Activated CD4-positive, alpha-beta memory T cell treated with anti-CD3 and anti-CD28 coated beads for 36 hours (primary cell): ENCODE measurements at regions of chr3 and their contacts with region 1.

Region 1: GRCh38 chr3:30199096-30199759 is 407.2 kb upstream of the TGFBR2 start:
- DNase-seq: peak; percentile 74
- H3K4me3 Mint-ChIP-seq: no peak overlapping the region
- H3K27ac Mint-ChIP-seq: no peak overlapping the region
- H3K4me1 Mint-ChIP-seq: no peaks in the 10 kb centered on the region
- H3K27me3 Mint-ChIP-seq: peaks cover 2% of the 10 kb centered on the region

Region 2: GRCh38 chr3:30042274-30042859 is 156.9 kb before region 1 on chr3:
- CTCF ChIA-PET with region 1: interaction called, 95 read pairs
- POLR2A ChIA-PET with region 1: no interaction called
- intact Hi-C with region 1: loop called (anchors 1 kb)
- DNase-seq: peak; percentile 58
- H3K4me3 Mint-ChIP-seq: no peak overlapping the region
- H3K27ac Mint-ChIP-seq: no peak overlapping the region
- H3K4me1 Mint-ChIP-seq: no peaks in the 10 kb centered on the region
- H3K27me3 Mint-ChIP-seq: peaks cover 21% of the 10 kb centered on the region

Region 3: GRCh38 chr3:30174357-30174756 is 24.9 kb before region 1 on chr3:
- CTCF ChIA-PET with region 1: interaction called, 16 read pairs
- POLR2A ChIA-PET with region 1: no interaction called
- intact Hi-C with region 1: no loop called
- DNase-seq: no peak
- H3K4me3 Mint-ChIP-seq: no peak overlapping the region
- H3K27ac Mint-ChIP-seq: no peak overlapping the region
- H3K4me1 Mint-ChIP-seq: no peaks in the 10 kb centered on the region
- H3K27me3 Mint-ChIP-seq: peaks cover 1% of the 10 kb centered on the region

Region 4: GRCh38 chr3:30241721-30242120 is 42.5 kb after region 1 on chr3:
- CTCF ChIA-PET with region 1: interaction called, 3 read pairs
- POLR2A ChIA-PET with region 1: no interaction called
- intact Hi-C with region 1: loop called (anchors 5 kb)
- DNase-seq: no peak
- H3K4me3 Mint-ChIP-seq: no peak overlapping the region
- H3K27ac Mint-ChIP-seq: no peak overlapping the region
- H3K4me1 Mint-ChIP-seq: no peaks in the 10 kb centered on the region
- H3K27me3 Mint-ChIP-seq: peaks cover 8% of the 10 kb centered on the region

Region 5: DNA sequence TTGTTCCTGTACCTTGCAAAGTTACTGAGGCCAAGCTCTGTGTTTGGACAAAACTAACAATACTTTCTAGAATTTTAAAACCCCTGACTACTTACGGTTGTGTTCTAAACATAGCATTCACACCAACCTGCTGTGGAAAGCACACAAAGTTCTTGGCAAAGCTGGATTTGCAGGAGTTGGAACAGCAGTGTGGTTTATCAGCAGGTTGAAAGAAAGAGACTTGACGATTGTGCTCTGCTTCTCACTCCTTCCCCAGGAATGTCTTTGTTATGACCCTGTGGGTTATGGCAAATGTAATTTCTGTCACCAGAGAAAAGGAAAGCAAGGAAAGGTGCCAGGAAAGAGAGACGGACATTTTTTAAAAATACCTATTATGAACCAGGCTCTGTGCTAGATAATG is 241.7 kb after region 1 on chr3:
- CTCF ChIA-PET with region 1: no interaction called
- POLR2A ChIA-PET with region 1: no interaction called
- intact Hi-C with region 1: no loop called
- DNase-seq: no peak
- H3K4me3 Mint-ChIP-seq: no peak overlapping the region
- H3K27ac Mint-ChIP-seq: no peak overlapping the region
- H3K4me1 Mint-ChIP-seq: peaks cover 6% of the 10 kb centered on the region
- H3K27me3 Mint-ChIP-seq: no peaks in the 10 kb centered on the region